ENCODE measurements at regions of chr12 and their contacts with region 1.

Region 1: DNA sequence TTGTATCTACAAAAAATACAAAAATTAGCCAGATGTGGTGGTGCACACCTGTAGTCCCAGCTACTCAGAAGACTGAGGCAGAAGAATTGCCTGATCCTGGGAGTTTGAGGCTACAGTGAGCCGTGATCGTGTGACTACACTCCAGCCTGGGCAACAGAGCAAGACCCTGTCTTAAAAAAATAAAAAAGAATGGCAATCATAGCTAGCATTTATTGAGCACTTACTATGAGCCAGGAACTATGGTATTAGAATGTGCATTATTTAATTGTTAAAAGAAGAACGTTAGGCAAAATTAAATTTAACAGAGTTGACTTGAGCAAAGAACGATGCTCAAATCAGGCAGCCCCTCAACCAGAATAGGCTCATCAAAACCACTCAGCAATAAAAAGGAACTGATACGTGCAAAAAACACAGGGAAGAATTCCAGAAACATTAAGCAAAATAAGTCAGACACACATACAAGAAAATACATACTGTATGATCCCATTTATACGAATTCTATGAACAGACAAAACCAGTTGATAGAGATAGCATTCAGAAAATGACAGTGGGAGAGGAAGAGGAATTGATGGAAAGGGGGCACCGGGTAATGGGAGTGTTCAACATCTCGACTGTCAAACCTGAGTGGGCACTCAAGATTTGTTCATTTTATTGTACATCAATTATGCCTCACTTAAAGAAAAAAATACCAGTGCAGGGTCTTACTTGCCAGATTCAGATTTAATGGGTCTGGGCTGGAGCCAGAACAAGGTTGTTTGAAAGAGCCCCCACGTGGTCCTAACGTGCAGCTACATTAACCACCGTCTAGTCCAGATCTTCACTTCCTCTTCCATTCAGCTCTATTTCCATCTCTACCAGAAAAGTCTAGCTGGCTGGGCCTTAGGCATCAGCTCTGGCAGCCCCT is 8.0 kb downstream of the SCNN1A start:
- DNase-seq: no peak
- ATAC-seq: no peak
- H3K4me3 ChIP-seq: no peak overlapping the region
- H3K27ac ChIP-seq: peak overlapping the region in 5 of 10 donors; percentile 2 to 77 (median 23)
- H3K4me1 ChIP-seq: peaks cover 0 to 56% (median 16%) of the 10 kb centered on the region in 9 donors
- H3K27me3 ChIP-seq: no peaks in the 10 kb centered on the region
- CTCF ChIP-seq: peak in 7 of 9 donors; percentile 9 to 56 (median 44)

Region 2: DNA sequence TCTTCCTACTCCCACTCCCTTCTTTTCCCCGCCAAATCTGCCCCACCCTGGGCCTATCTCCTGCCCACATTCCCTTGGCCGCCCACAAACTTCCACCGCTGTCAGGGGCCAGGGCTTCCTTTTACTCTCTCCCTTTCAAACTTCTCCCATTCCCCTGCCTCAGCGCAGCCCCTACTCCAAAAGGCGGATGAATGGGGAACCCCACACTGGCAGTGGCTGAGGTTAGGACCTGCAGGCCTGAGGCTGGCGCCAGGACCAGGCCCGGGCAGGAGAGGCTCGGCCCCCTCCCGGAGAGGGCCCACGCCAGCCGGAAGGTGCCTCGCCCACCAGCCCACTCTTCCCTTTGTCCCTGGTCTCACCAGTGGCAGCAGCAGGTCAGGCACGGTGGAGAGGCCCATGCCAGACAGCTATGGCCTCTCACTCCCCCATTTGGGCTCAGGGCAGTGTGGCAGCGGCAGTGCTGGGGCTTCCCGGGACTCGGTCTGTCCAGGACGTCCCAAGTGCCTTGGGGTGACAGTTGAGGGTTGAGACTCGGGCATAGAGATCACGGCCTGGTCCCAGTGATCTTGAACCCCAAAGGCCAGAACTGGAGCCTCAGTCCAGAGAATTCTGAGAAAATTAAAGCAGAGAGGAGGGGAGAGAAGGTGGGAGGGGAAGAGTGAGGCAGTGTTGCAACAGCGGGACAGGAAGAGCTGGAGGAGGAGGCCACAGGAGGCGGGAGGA is 25.7 kb before region 1 on chr12 and contains the start of gene TNFRSF1A:
- intact Hi-C with region 1: loop called in 2 of 10 experiments (anchors 1 to 2 kb)
- DNase-seq: peak; percentile 62 to 86
- ATAC-seq: peak; percentile 76 to 87 (median 83)
- H3K4me3 ChIP-seq: peak within 1 kb of the TSS; percentile 68 to 99 (median 92)
- H3K27ac ChIP-seq: peak within 1 kb of the TSS; percentile 91 to 100 (median 98)
- H3K4me1 ChIP-seq: peaks cover 30 to 82% (median 70%) of the 10 kb centered on the region in 9 donors
- H3K27me3 ChIP-seq: no peaks in the 10 kb centered on the region
- CTCF ChIP-seq: no peak
- total RNA-seq, gene TNFRSF1A: 29.4 to 100 (median 39.2) TPM

Region 3: GRCh38 chr12:6461401-6462233 is 94.3 kb after region 1 on chr12:
- intact Hi-C with region 1: no loop called
- DNase-seq: no peak
- ATAC-seq: peak; percentile 25 to 61 (median 35)
- H3K4me3 ChIP-seq: peak overlapping the region in 1 of 10 donors; percentile 22
- H3K27ac ChIP-seq: peak overlapping the region in 9 of 10 donors; percentile 39 to 89 (median 56)
- H3K4me1 ChIP-seq: peaks cover 0 to 71% (median 12%) of the 10 kb centered on the region in 9 donors
- H3K27me3 ChIP-seq: no peaks in the 10 kb centered on the region
- CTCF ChIP-seq: no peak